Psoas muscle (tissue), 8 donors: ENCODE measurements at regions of chr9 and their contacts with region 1.

Region 1: DNA sequence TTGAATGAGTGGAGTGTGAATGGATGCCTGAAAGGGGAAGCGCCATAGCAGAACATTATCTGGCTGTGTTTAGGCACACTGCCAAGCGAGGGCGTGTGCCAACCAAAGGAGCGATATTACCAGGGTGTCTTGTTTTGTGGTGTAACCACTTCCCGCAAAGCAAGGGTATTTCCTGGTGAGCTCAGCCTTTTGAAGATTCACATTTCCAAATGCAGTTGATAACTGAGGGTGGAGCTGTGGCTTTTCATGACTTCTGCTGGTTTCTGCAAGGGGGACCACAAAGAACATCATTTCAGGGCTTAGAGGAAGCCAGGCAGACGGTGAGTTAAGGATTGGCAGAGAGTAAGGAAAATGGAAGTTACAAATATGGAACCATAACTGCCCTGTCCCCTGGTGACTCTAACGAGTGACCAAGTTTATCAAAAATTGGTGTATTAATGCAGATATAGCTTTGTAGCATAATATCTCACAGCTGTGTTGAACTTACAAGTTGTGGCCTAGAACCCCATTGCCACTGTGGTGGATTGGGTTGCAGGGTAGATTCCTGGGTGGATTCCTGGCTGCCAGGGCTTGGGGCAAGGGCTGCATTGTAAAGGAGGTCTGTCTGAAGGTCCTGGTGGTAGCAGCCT is 71.4 kb downstream of the RALGPS1 start:
- DNase-seq: peak; percentile 69 to 83
- ATAC-seq: peak; percentile 63 to 82 (median 78)
- H3K4me3 ChIP-seq: no peak overlapping the region
- H3K27ac ChIP-seq: peak overlapping the region; percentile 82
- H3K4me1 ChIP-seq: peaks cover 52% of the 10 kb centered on the region
- H3K27me3 ChIP-seq: no peaks in the 10 kb centered on the region
- CTCF ChIP-seq: no peak

Region 2: GRCh38 chr9:127021664-127022363 is 35.8 kb after region 1 on chr9:
- intact Hi-C with region 1: loop called (anchors 2 to 5 kb)
- DNase-seq: peak; percentile 89 to 93
- ATAC-seq: peak; percentile 94 to 98 (median 96)
- H3K4me3 ChIP-seq: no peak overlapping the region
- H3K27ac ChIP-seq: peak overlapping the region; percentile 76
- H3K4me1 ChIP-seq: peaks cover 43% of the 10 kb centered on the region
- H3K27me3 ChIP-seq: no peaks in the 10 kb centered on the region
- CTCF ChIP-seq: no peak

Region 3: GRCh38 chr9:127104465-127105311 is 118.7 kb after region 1 on chr9:
- intact Hi-C with region 1: loop called in 1 of 2 experiments (anchors 5 kb)
- DNase-seq: no peak
- ATAC-seq: peak in 1 of 4 donors; percentile 39
- H3K4me3 ChIP-seq: no peak overlapping the region
- H3K27ac ChIP-seq: peak overlapping the region; percentile 9
- H3K4me1 ChIP-seq: peaks cover 15% of the 10 kb centered on the region
- H3K27me3 ChIP-seq: no peaks in the 10 kb centered on the region
- CTCF ChIP-seq: no peak